Activated CD4-positive, alpha-beta T cell treated with anti-CD3 and anti-CD28 coated beads for 36 hours (primary cell): ENCODE measurements at regions of chr10 and their contacts with region 1.

Region 1: GRCh38 chr10:110497438-110498086 is at the start of gene DUSP5:
- DNase-seq: peak; percentile 97
- ATAC-seq: peak; percentile 68
- H3K4me3 Mint-ChIP-seq: peak within 1 kb of the TSS; percentile 95
- H3K27ac Mint-ChIP-seq: peak within 1 kb of the TSS; percentile 92
- H3K4me1 Mint-ChIP-seq: peaks cover 46% of the 10 kb centered on the region
- H3K27me3 Mint-ChIP-seq: no peaks in the 10 kb centered on the region
- total RNA-seq, gene DUSP5: 60.9 to 70.7 TPM

Region 2: GRCh38 chr10:110137142-110137545 is 360.4 kb before region 1 on chr10:
- CTCF ChIA-PET with region 1: interaction called, 3 read pairs
- POLR2A ChIA-PET with region 1: no interaction called
- intact Hi-C with region 1: loop called in 1 of 2 experiments (anchors 5 kb)
- DNase-seq: no peak
- ATAC-seq: peak; percentile 78
- H3K4me3 Mint-ChIP-seq: no peak overlapping the region
- H3K27ac Mint-ChIP-seq: peak overlapping the region; percentile 7
- H3K4me1 Mint-ChIP-seq: peaks cover 34% of the 10 kb centered on the region
- H3K27me3 Mint-ChIP-seq: no peaks in the 10 kb centered on the region

Region 3: GRCh38 chr10:110311357-110311949 is 186.1 kb before region 1 on chr10:
- CTCF ChIA-PET with region 1: interaction called, 5 read pairs
- POLR2A ChIA-PET with region 1: interaction called, 3 read pairs
- intact Hi-C with region 1: loop called (anchors 1 kb)
- DNase-seq: peak; percentile 61
- ATAC-seq: peak; percentile 70
- H3K4me3 Mint-ChIP-seq: no peak overlapping the region
- H3K27ac Mint-ChIP-seq: no peak overlapping the region
- H3K4me1 Mint-ChIP-seq: peaks cover 27% of the 10 kb centered on the region
- H3K27me3 Mint-ChIP-seq: peaks cover 2% of the 10 kb centered on the region

Region 4: DNA sequence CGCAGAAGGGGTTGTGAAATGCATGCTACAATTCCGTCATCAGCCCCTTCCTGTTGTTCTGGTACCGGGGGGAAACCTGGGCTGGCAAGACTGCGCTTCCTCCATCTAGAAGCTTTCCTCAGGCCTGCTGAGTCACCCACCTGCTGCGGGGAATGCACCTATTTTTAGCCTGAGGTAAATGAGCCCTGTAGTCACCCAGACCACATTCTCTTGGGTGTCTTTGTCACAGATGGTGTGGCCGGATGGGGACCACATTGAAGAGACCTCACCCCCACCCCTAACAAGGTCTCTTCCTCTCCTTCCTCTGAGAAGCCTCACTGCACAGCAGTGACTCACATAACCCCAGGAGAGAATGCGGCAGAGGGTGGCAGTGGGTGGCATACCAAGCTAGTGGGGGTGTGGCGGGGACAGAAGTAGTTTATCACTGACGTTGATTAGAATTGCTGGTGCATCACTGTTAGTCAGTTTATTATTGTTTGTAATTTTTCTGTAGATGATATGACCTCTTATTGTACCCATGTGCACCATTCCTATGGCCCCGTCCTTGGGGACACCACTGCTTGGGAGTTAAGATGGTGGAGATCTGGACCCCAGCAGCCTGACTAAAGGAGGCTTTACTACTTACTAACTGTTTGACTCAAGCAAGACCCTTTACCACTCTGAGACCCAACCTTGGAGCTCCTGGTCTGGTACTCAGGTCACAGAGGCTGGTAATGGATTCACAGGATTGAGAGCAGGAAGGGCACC is 82.8 kb before region 1 on chr10:
- CTCF ChIA-PET with region 1: no interaction called
- POLR2A ChIA-PET with region 1: interaction called, 6 read pairs
- intact Hi-C with region 1: loop called (anchors 1 to 2 kb)
- DNase-seq: peak; percentile 93
- ATAC-seq: peak; percentile 94
- H3K4me3 Mint-ChIP-seq: peak overlapping the region; percentile 34
- H3K27ac Mint-ChIP-seq: peak overlapping the region; percentile 91
- H3K4me1 Mint-ChIP-seq: peaks cover 72% of the 10 kb centered on the region
- H3K27me3 Mint-ChIP-seq: no peaks in the 10 kb centered on the region

Region 5: DNA sequence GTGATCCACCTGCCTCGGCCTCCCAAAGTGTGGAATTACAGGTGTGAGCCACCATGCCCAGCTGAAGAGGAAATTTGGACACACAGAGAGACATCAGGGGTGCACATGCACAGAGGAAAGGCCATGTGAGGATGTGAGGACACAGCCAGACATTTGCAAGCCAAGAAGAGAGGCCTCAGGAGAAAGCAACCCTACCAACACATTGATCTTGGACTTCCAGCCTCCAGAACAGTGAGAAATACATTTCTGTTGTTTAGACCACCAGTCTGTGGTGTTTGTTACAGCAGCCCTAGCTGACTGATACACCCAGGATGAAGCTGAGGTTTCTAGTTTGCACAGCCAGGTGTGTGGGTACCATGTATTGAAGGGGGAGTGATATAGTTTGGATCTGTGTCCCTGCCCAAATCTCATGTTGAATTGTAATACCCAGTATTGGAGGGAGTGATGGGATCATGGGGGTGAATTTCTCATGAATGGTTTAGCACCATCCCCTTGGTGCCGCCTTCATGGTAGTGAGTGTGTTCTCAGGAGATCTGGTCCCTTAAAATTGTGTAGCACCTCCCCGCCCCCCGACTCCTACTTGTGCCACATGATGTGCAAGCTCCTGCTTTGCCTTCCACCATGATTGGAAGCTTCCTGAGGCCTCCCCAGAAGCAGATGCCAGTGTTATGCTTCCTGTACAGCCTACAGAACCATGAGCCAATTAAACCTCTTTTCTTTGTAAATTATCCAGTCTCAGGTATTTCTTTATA is 64.6 kb before region 1 on chr10:
- CTCF ChIA-PET with region 1: no interaction called
- POLR2A ChIA-PET with region 1: no interaction called
- intact Hi-C with region 1: no loop called
- DNase-seq: peak; percentile 2
- ATAC-seq: no peak
- H3K4me3 Mint-ChIP-seq: no peak overlapping the region
- H3K27ac Mint-ChIP-seq: no peak overlapping the region
- H3K4me1 Mint-ChIP-seq: peaks cover 11% of the 10 kb centered on the region
- H3K27me3 Mint-ChIP-seq: no peaks in the 10 kb centered on the region

Region 6: GRCh38 chr10:110535958-110536891 is 38.7 kb after region 1 on chr10:
- CTCF ChIA-PET with region 1: interaction called, 6 read pairs
- POLR2A ChIA-PET with region 1: no interaction called
- intact Hi-C with region 1: loop called in 1 of 2 experiments (anchors 1 kb)
- DNase-seq: peak; percentile 87
- ATAC-seq: peak; percentile 93
- H3K4me3 Mint-ChIP-seq: peak overlapping the region; percentile 15
- H3K27ac Mint-ChIP-seq: peak overlapping the region; percentile 79
- H3K4me1 Mint-ChIP-seq: peaks cover 37% of the 10 kb centered on the region
- H3K27me3 Mint-ChIP-seq: peaks cover 3% of the 10 kb centered on the region

Region 7: DNA sequence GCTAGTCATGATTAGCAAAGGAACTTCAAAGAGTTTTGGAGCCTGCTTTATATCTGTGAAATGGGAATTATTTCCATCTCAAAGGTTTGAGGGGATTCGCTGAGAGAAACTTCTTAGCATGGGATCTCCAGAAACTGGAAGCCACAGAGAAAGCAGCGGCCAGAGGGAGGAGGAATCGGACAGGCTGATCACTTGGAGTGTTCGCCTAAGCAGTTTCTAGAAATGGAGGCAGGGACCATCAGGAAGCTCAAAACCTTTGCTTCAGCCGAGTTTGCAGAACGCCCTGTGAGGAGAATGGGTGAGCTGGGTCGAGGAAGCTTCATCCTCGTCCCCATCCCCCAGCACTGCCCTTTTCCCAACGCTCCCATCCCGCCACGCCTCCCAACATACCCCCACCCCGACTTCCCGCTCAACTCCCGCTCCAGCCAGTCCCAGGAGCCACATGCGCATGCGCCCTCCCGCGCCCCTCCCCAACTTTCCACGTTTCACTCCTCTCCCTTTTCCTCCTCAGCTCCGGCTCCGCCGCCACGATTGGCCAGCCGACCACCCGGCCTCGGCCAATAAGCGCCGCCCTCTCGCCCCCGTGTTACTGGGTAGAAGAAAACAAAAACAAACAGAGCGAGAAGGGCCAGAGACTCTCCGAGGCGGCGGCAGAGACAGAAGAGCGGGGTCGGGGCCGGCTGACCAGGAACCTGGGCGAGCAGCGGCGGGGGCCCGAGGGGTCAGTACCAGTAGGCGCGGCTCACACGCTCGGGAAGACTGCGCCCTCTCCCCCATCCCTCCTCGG is 373.9 kb after region 1 on chr10 and contains the start of gene PDCD4:
- CTCF ChIA-PET with region 1: no interaction called
- POLR2A ChIA-PET with region 1: no interaction called
- intact Hi-C with region 1: loop called in 1 of 2 experiments (anchors 1 kb)
- DNase-seq: peak; percentile 97
- ATAC-seq: peak; percentile 85
- H3K4me3 Mint-ChIP-seq: peak within 1 kb of the TSS; percentile 87
- H3K27ac Mint-ChIP-seq: peak within 1 kb of the TSS; percentile 95
- H3K4me1 Mint-ChIP-seq: peaks cover 63% of the 10 kb centered on the region
- H3K27me3 Mint-ChIP-seq: no peaks in the 10 kb centered on the region
- total RNA-seq, gene PDCD4: 69.8 to 125 TPM